BJ (cell line): ENCODE measurements at regions of chr1 and their contacts with region 1.

Region 1: DNA sequence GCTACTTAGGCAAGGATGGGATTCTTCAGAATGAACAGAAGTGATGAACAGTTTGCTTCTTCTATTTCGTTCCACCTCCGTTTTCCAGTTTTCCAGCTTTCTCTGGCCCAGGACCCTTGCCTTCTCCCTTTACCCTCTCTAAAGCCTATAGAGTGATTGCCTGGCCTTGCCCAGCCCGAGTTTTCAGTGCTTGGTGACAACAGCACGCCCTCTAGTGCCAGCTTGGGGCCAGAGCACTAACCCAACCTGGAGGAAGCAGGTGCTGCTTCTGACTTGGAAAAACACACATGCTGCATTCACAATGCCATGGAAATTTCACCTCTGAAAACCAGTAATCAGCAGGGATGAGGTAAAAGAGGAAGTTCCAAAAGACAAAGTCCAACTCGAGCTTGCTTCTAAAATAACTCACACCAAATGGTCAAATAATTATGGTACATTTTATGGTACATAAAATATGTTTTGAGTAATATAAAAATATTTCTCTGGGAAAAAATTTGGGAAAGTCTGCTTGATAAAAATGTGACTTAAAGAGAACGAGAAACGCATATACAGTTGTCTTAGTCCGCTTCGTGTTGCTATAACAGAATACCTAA is 26.1 kb downstream of the UBE2T start:
- DNase-seq: no peak
- H3K4me3 ChIP-seq: no peak overlapping the region
- H3K27me3 ChIP-seq: peaks cover 27% of the 10 kb centered on the region
- CTCF ChIP-seq: peak; percentile 99

Region 2: GRCh38 chr1:202200112-202200566 is 115.5 kb before region 1 on chr1:
- CTCF ChIA-PET with region 1: interaction called, 158 read pairs
- POLR2A ChIA-PET with region 1: no interaction called
- DNase-seq: no peak
- H3K4me3 ChIP-seq: no peak overlapping the region
- H3K27me3 ChIP-seq: peaks cover 23% of the 10 kb centered on the region
- CTCF ChIP-seq: no peak

Region 3: DNA sequence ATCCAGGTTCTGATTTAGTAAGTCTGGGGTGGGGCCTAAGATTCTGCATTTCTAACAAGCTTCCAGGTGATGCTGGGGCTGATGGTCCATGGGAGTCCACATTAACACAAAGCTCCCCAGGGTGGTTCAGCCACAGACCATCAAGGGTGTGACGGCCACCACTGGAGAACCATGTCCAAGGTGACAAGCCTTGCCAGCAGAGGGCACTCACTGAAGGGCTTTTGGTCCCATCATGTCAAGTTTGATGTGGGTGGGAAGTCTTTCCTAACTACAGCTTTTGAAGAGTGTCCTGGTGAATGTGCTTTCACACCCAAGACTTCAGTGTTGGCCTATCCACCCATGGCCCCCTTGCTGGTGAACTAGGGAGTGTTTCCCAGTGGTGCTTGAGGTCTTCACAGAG is 41.1 kb before region 1 on chr1:
- CTCF ChIA-PET with region 1: interaction called, 49 read pairs
- POLR2A ChIA-PET with region 1: no interaction called
- DNase-seq: no peak
- H3K4me3 ChIP-seq: no peak overlapping the region
- H3K27me3 ChIP-seq: peaks cover 52% of the 10 kb centered on the region
- CTCF ChIP-seq: peak; percentile 51

Region 4: GRCh38 chr1:202291961-202292712 is 23.5 kb before region 1 on chr1:
- CTCF ChIA-PET with region 1: interaction called, 14 read pairs
- POLR2A ChIA-PET with region 1: no interaction called
- DNase-seq: no peak
- H3K4me3 ChIP-seq: no peak overlapping the region
- H3K27me3 ChIP-seq: peaks cover 36% of the 10 kb centered on the region
- CTCF ChIP-seq: no peak

Region 5: GRCh38 chr1:202304375-202304774 is 11.3 kb before region 1 on chr1:
- CTCF ChIA-PET with region 1: interaction called, 44 read pairs
- POLR2A ChIA-PET with region 1: no interaction called
- DNase-seq: no peak
- H3K4me3 ChIP-seq: no peak overlapping the region
- H3K27me3 ChIP-seq: peaks cover 59% of the 10 kb centered on the region
- CTCF ChIP-seq: no peak

Region 6: DNA sequence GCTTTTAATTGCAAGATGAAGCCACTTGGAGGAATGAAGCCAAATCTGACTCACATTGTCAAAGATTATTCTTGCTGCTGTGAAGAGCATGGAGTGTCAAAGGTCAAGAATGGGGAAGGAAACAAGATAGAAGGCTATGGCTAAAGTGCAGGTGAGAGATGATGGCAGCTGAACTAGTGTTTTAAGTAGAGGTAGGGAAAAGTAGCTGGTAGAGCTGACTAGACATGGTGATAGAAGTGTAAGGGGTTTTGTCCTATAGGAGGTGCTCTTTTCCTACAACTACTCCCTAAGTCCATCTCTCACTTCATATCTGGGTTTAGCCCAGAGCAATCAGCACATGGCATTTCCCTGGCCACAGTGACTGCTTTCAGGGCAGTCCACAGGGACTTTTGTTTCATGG is 14.2 kb after region 1 on chr1:
- CTCF ChIA-PET with region 1: interaction called, 20 read pairs
- POLR2A ChIA-PET with region 1: no interaction called
- DNase-seq: no peak
- H3K4me3 ChIP-seq: no peak overlapping the region
- H3K27me3 ChIP-seq: no peaks in the 10 kb centered on the region
- CTCF ChIP-seq: no peak